Common myeloid progenitor, CD34-positive (primary cell): ENCODE measurements at regions of chr6 and their contacts with region 1.

Region 1: DNA sequence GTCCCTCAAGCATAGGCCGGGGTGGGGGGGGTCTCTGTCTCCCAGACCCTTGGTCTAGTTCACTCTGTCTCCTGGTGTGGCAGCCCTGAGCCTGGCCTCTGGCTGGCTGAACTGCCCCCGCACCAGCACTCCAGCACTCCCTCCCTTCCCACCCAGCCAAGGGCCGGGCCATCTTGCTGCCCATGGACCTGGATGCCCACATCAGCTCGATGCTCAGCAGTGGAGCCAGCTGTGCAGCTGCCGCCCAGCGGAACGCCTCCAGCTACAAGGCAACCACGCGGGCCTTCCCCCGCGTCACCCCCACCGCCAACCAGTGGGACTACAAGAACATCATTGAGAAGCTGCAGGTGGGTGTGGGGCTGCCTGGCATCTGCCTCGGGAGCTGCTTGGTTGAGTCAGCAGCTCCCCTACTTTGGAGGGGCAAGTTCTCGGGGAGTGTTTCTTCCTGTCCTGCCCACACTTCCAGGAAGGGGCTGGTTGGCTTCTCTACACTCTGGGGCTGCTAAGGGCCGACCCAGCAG is 28.4 kb downstream of the UQCC2 start:
- DNase-seq: peak in 2 of 3 donors; percentile 62 to 73
- H3K4me3 ChIP-seq: no peak overlapping the region
- H3K27ac ChIP-seq: no peak overlapping the region
- H3K4me1 ChIP-seq: peaks cover 0 to 8% (median 4%) of the 10 kb centered on the region in 4 experiments
- H3K27me3 ChIP-seq: no peaks in the 10 kb centered on the region

Region 2: DNA sequence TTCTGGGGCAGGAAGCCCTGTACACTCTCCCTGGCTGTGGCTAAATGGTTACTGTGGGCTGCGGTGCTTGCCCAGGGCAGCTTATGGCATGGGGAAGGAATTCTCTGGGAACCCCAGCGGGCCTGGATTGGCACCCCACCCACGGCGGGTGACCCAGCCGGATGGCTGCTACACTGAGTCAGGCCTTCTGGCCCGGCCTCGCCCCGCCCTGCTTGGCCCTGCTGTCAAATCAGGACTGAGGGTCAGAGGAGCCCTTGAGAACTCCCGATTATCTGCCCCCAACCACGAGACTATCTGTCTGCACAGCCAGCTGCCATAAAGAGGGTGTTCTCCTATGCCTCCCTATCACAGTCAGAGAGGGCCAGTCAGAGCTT is 69.3 kb before region 1 on chr6:
- CTCF ChIA-PET with region 1: no interaction called
- POLR2A ChIA-PET with region 1: no interaction called
- DNase-seq: no peak
- H3K4me3 ChIP-seq: no peak overlapping the region
- H3K27ac ChIP-seq: no peak overlapping the region
- H3K4me1 ChIP-seq: peaks cover 0 to 4% (median 1%) of the 10 kb centered on the region in 4 experiments
- H3K27me3 ChIP-seq: no peaks in the 10 kb centered on the region

Region 3: GRCh38 chr6:33661106-33661838 is 21.8 kb before region 1 on chr6:
- CTCF ChIA-PET with region 1: no interaction called
- POLR2A ChIA-PET with region 1: no interaction called
- DNase-seq: no peak
- H3K4me3 ChIP-seq: no peak overlapping the region
- H3K27ac ChIP-seq: no peak overlapping the region
- H3K4me1 ChIP-seq: peaks cover 0 to 11% (median 0%) of the 10 kb centered on the region in 4 experiments
- H3K27me3 ChIP-seq: peaks cover 0 to 2% (median 0%) of the 10 kb centered on the region in 5 experiments

Region 4: DNA sequence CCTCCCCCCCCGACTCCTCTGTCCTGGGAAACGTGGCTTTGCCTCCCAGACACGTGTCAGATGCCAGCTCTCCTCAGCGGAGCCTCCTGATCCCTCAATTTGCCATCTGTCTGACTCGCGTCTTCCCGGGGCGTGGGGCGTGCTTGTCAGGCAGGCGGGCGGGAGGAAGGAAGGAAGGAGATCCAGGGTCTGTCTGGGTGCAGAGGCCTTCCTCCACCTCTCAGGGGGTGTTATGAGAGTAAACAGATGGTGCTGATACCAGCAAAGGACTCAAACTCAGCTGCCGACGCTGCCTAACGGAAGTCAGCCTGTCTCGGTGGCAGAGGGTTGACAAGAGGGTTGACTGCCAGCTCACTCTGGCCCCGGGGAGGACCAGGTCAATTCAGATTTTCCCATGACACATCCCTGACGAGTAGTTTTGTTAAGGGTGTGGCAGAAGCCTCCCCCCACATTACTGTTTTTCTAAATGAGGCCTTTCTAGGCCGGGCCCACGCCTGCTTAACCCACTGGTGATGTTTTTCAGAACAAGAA is 11.4 kb after region 1 on chr6:
- CTCF ChIA-PET with region 1: interaction called, 16 read pairs
- POLR2A ChIA-PET with region 1: no interaction called
- DNase-seq: peak; percentile 50 to 93 (median 87)
- H3K4me3 ChIP-seq: peak overlapping the region in 2 of 7 experiments; percentile 14 to 31
- H3K27ac ChIP-seq: peak overlapping the region in 1 of 2 experiments; percentile 47
- H3K4me1 ChIP-seq: peaks cover 7 to 77% (median 74%) of the 10 kb centered on the region in 4 experiments
- H3K27me3 ChIP-seq: no peaks in the 10 kb centered on the region

Region 5: DNA sequence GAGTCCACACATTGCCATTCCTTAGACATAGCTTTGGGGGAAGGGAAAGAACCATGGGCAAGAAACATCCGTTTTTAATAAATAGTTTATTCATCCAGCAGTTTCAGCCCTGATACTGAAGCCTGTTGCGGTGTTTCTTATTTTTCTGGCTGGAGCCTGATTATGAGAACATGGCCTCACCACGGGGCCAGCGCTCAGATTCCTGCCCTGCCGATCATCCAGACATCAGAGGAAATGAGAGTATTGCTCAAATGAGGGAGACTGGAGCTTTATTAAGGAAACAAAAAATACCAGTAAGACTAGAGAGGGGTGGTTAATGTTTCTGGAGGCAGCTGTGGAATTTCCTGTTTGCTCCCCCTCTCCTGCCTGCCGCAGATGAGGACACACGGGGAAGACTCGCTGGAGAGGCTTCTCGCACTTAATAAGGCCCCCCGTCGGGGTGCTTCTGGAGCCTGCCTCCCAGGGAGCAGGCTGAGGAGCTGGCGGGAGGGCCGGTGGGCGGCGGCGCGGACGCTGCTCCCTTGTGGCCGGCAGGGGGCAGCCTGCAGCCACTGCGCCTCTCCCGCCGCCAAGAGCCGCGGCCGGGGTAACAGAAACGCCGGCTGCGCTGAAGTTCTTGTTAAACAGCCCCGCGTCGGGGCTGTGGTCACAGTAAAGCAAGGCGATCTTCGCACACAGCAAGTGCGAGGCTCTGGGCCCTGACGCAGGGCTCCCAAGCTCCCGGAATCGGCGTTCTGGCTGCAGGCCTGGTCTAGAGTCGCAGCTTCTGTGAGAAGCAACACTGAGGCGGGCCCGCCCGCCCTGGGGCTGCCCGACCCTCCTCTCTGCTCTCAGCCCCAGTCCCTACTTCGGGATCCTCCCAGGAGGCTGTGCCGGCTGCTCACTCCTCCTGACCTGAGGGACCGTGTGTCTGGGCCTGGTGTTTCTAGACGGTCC is 88.3 kb after region 1 on chr6:
- CTCF ChIA-PET with region 1: no interaction called
- POLR2A ChIA-PET with region 1: no interaction called
- DNase-seq: peak; percentile 63 to 83 (median 82)
- H3K4me3 ChIP-seq: no peak overlapping the region
- H3K27ac ChIP-seq: no peak overlapping the region
- H3K4me1 ChIP-seq: peaks cover 0 to 8% (median 1%) of the 10 kb centered on the region in 4 experiments
- H3K27me3 ChIP-seq: peaks cover 0 to 24% (median 5%) of the 10 kb centered on the region in 5 experiments